PC-3 (cell line): ENCODE measurements at regions of chr6 and their contacts with region 1.

Region 1: DNA sequence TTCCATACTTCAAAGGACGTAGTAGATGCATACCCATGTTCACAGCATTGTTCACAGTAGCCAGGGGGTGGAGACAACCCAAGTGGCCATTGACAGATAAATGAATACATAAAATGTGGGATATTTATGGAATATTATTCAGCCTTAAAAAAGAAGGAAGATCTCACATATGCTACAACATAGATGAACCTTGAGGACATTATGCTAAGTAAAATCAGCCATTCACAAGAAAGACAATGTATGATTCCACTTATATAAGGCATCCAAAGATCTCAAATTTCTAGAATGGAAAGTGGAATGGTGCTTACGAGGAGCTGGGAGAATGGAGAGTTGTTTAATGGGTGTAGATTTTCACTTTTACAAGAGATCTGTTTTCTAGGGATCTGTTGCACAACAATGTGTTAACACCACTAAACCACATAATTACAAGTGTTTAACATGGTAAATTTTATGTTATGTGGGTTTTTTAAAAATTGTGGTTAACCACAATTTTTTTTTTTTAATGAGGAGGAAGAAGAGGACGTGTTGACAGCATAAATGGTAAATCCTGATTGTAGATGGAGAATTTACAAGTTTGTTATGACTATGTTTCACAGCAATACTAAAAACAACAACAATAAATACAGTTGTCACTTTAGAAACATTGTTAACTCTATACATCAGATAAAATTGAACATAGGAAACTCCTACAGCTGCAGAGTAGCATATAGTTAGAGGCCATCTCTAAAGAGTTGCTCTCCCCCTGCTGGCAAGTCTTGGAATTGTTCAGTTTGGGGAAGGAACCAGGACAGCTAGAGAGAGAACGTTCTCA is 41.6 kb downstream of the CCN2 start:
- DNase-seq: peak; percentile 87
- ATAC-seq: peak; percentile 93
- H3K4me3 ChIP-seq: no peak overlapping the region
- H3K27ac ChIP-seq: no peak overlapping the region
- H3K4me1 ChIP-seq: peaks cover 5% of the 10 kb centered on the region
- H3K27me3 ChIP-seq: no peaks in the 10 kb centered on the region
- CTCF ChIP-seq: peak; percentile 84

Region 2: DNA sequence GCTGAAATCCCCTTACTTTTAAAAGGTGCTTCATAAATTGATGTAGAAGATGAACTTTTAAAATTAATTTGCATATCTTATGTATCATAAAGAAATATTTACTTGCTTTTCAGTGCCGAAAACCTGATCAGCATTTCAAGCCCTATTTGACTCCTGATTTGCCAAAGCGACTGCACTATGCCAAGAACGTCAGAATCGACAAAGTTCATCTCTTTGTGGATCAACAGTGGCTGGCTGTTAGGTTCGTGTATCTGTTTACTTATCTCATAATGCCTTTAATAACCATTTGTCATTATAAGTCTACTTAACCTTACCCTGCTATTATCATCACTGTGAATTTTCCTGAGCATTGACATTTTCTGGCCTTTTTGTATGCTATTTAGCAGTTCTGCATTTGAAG is 216.2 kb before region 1 on chr6:
- CTCF ChIA-PET with region 1: interaction called, 4 read pairs
- POLR2A ChIA-PET with region 1: no interaction called
- intact Hi-C with region 1: loop called (anchors 1 kb)
- DNase-seq: no peak
- ATAC-seq: no peak
- H3K4me3 ChIP-seq: no peak overlapping the region
- H3K27ac ChIP-seq: no peak overlapping the region
- H3K4me1 ChIP-seq: no peaks in the 10 kb centered on the region
- H3K27me3 ChIP-seq: no peaks in the 10 kb centered on the region
- CTCF ChIP-seq: no peak

Region 3: GRCh38 chr6:131782764-131783163 is 126.8 kb before region 1 on chr6:
- CTCF ChIA-PET with region 1: interaction called, 6 read pairs
- POLR2A ChIA-PET with region 1: no interaction called
- intact Hi-C with region 1: loop called (anchors 1 kb)
- DNase-seq: peak; percentile 31
- ATAC-seq: peak; percentile 46; the same call in 1 of the 2 replicates
- H3K4me3 ChIP-seq: no peak overlapping the region
- H3K27ac ChIP-seq: no peak overlapping the region
- H3K4me1 ChIP-seq: peaks cover 8% of the 10 kb centered on the region
- H3K27me3 ChIP-seq: no peaks in the 10 kb centered on the region
- CTCF ChIP-seq: peak; percentile 35; the same call in 1 of the 2 replicates

Region 4: DNA sequence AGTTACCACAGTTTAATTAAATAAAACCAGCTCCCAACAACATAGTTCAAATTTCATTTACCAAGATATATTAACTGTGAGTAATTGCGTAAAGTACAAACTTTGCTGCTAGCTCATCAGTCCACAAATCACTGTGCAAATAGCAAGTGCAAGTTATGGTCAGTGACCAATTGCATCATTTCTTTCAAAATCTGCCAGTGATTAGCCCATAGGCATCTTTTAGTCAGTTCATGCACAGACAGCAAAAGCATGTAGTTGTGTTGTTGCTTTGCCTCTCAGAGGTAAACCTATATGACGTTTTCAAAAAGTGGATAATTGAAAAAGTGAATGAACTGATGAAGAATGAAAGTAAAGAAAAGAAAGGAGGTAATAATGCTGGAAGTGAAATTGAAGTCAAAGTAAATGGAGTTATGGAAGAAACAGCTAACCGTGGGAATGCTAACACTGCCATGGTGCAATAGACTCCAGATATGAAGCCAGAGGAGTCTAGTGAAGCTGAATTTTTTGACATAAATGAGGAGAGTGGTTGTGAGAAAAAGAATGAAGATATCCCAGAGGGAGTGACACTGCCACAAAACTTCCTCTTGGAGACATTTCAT is 65.3 kb before region 1 on chr6:
- CTCF ChIA-PET with region 1: no interaction called
- POLR2A ChIA-PET with region 1: interaction called, 3 read pairs
- intact Hi-C with region 1: loop called (anchors 5 kb)
- DNase-seq: peak; percentile 74
- ATAC-seq: peak; percentile 89
- H3K4me3 ChIP-seq: no peak overlapping the region
- H3K27ac ChIP-seq: no peak overlapping the region
- H3K4me1 ChIP-seq: peaks cover 13% of the 10 kb centered on the region
- H3K27me3 ChIP-seq: no peaks in the 10 kb centered on the region
- CTCF ChIP-seq: no peak

Region 5: DNA sequence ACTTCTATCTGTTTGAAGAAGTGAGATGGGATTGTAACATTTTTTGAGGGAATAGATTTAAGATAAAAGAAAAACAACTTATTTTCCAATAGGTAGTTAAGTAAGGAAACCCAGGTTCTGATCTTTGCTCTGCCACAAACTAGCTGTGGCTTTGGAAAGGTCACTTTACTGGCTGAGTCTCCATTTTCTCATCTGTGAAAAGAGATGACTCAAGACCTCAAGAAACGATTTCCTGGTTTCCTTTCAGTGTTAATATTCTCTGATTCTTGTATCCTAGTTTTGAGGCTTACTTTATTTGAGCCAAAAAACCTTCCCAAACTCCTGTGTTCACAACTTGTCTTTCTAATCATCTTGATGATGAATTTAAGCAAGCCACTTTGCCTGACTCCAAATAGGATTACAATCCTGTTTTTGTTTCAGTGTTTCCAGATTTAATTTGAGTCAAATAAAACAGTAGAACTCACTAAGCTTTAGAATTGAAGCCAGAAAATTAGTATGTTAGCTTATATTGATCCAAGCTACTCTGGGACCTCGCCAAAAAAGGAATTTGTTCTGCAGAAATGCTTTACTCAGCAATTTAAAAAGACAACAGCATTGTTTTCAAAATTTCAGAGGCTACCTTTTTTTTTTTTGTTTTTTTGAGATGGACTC is 50.7 kb before region 1 on chr6:
- CTCF ChIA-PET with region 1: no interaction called
- POLR2A ChIA-PET with region 1: no interaction called
- intact Hi-C with region 1: loop called (anchors 2 kb)
- DNase-seq: peak; percentile 64
- ATAC-seq: peak; percentile 58
- H3K4me3 ChIP-seq: no peak overlapping the region
- H3K27ac ChIP-seq: peak overlapping the region; percentile 84
- H3K4me1 ChIP-seq: peaks cover 34% of the 10 kb centered on the region
- H3K27me3 ChIP-seq: no peaks in the 10 kb centered on the region
- CTCF ChIP-seq: no peak